ENCODE measurements at regions of chrX and their contacts with region 1.

Region 1: DNA sequence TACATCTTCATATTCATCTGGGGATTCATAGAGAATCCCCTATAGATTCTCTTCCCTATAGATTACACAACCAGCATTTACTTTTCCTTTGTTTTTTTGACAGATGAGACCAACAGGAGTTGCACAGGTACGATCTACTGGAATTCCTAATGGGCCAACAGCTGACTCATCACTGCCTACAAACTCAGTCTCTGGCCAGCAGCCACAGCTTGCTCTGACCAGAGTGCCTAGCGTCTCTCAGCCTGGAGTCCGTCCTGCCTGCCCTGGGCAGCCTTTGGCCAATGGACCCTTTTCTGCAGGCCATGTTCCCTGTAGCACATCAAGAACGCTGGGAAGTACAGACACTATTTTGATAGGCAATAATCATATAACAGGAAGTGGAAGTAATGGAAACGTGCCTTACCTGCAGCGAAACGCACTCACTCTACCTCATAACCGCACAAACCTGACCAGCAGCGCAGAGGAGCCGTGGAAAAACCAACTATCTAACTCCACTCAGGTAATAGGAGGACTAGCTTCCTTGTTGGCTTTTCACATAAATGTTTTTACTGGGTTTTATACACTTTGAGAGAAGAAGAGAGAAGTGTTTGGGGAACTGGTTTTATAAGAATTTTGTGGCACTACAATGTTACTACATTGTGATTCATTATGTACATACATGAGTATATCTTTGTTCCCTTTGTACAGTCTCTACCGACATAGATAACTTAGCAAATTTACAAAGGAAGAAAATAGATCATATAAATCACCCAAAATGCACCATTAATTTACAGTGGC is 137.2 kb downstream of the DIPK2B start:
- DNase-seq: no peak
- H3K4me3 ChIP-seq: no peak overlapping the region
- H3K27ac ChIP-seq: no peak overlapping the region
- H3K4me1 ChIP-seq: peaks cover 10% of the 10 kb centered on the region
- H3K27me3 ChIP-seq: no peaks in the 10 kb centered on the region
- CTCF ChIP-seq: no peak

Region 2: GRCh38 chrX:44997888-44998287 is 65.6 kb before region 1 on chrX:
- CTCF ChIA-PET with region 1: no interaction called
- POLR2A ChIA-PET with region 1: no interaction called
- intact Hi-C with region 1: no loop called
- DNase-seq: no peak
- H3K4me3 ChIP-seq: no peak overlapping the region
- H3K27ac ChIP-seq: no peak overlapping the region
- H3K4me1 ChIP-seq: no peaks in the 10 kb centered on the region
- H3K27me3 ChIP-seq: no peaks in the 10 kb centered on the region
- CTCF ChIP-seq: no peak

Region 3: DNA sequence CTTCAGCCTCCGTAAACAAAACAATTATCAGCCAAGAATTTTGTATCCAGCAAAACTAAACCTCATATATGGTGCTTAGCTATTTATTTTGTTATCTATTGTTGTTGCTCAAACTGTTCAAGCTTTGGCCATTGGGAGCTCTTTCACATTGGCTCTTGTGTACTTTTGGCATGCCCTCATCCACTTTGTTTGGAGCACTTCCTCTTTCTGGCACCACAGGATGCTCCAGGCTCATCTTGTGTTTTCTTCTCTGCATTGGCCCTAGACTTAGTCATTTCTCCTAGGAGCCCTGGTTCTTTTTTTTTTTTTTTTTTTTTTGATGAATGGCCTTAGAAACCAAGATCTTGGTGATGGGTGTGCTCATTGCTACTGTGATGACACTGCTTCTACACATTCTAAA is 62.7 kb after region 1 on chrX:
- CTCF ChIA-PET with region 1: no interaction called
- POLR2A ChIA-PET with region 1: interaction called, 25 read pairs
- intact Hi-C with region 1: no loop called
- DNase-seq: no peak
- H3K4me3 ChIP-seq: no peak overlapping the region
- H3K27ac ChIP-seq: no peak overlapping the region
- H3K4me1 ChIP-seq: no peaks in the 10 kb centered on the region
- H3K27me3 ChIP-seq: no peaks in the 10 kb centered on the region
- CTCF ChIP-seq: no peak